ENCODE measurements at regions of chr19 and their contacts with region 1.

Region 1: DNA sequence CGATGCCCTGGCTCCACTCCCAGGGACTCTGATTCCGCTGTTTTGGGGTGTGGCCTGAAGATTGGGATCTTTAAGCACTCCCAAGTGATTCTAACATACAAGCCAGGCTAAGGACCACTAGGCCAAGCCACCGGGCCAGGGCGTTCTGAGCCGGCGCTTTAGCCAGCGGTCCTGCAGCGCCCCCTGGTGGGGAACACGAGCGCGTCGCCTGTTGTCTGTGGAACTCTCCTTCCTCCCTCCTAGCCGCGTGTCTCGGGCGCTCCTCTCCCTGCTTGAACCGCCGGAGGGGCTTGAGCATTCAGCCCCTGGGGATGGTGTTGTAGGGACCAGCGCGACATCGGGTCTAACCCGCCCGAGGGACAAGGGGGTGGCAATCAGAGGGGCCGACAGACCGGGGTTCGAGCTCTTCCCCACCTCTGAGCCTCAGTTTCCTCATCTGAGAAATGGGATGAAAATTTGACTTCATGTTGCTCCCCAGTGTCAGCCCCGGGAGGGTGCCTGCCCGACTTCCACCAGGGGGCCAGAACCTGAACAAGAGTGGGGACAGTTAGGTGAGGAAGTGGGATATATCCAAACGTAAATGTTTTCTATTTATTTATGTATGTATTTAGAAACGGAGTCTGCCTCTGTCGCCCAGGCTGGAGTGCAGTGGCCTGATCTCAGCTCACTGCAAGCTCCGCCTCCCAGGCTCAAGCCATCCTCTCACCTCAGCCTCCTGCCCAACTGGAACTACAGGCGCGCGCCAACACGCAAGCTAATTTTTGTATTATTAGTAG is 18.0 kb upstream of the PNMA8B start:
- DNase-seq: peak; percentile 57
- H3K4me3 ChIP-seq: no peak overlapping the region
- H3K27ac ChIP-seq: no peak overlapping the region
- H3K4me1 ChIP-seq: peaks cover 5% of the 10 kb centered on the region
- H3K27me3 ChIP-seq: no peaks in the 10 kb centered on the region
- CTCF ChIP-seq: peak; percentile 68 to 97

Region 2: GRCh38 chr19:46283771-46284170 is 229.9 kb before region 1 on chr19:
- CTCF ChIA-PET with region 1: no interaction called
- dilution Hi-C with region 1: no loop called
- in situ Hi-C with region 1: loop called (anchors 10 kb)
- intact Hi-C with region 1: loop called (anchors 1 kb)
- DNase-seq: no peak
- H3K4me3 ChIP-seq: no peak overlapping the region
- H3K27ac ChIP-seq: no peak overlapping the region
- H3K4me1 ChIP-seq: peaks cover under 1% of the 10 kb centered on the region
- H3K27me3 ChIP-seq: no peaks in the 10 kb centered on the region
- CTCF ChIP-seq: no peak

Region 3: DNA sequence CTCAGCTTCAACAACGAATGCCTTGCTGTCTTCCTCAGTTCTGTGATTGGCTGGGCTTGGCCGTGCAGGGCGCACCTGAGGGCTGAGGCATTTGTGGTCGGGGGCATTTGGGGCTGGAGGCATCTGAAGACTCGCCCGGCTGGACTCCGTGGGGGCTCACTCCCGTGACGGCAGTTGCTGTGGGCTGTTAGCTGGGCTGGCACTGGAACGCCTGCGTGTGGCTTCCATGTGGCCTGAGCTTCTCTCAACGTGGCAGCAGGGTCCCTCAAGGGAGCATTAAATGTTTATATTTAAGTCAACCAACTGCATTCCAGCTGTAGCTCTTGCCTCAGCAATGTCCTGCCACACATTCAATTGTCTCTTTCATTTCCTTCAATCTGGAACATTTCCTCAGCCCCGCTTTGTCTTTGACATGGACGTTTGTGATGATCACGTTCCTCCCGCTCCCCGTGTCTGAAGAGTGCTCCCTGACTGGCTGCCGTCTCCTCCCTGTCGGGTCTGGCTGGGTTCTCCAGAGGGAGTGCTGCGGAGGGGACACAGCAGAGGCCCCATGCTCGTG is 121.3 kb before region 1 on chr19:
- CTCF ChIA-PET with region 1: no interaction called
- dilution Hi-C with region 1: no loop called
- in situ Hi-C with region 1: no loop called
- intact Hi-C with region 1: loop called (anchors 1 kb)
- DNase-seq: no peak
- H3K4me3 ChIP-seq: no peak overlapping the region
- H3K27ac ChIP-seq: no peak overlapping the region
- H3K4me1 ChIP-seq: no peaks in the 10 kb centered on the region
- H3K27me3 ChIP-seq: no peaks in the 10 kb centered on the region
- CTCF ChIP-seq: no peak

Region 4: DNA sequence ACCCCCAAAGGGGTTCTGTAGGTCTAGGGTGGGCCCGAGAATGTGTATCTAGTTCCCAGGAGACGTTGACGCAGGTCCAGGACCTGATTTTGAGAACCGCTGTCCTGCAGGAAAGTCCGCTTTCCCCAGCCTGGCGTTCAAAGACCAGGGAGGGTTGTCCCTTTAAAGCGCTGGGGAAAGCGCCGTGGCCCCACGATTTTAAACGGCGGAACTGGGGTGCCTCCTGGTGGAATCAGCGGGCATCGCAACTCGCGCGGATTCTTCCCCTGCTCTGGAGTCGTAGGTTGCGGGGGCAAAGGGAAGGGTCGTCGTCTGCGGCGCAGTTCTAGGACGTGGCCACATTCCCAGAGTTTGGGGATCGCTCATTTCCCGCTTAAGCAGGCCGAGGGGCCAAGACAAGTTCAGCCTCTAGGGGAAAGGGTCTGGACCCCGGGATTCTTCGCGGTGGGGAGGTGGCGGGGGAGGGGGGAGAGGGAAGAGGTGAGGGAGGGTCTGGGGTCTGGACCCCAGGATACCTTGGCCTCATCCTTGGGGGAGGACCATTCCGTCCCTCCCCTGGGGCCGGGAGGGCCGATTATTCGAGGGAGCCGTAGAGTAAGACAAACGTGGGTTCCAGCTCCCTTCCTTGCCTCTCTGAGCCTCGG is 25.7 kb before region 1 on chr19:
- CTCF ChIA-PET with region 1: no interaction called
- dilution Hi-C with region 1: no loop called
- in situ Hi-C with region 1: no loop called
- intact Hi-C with region 1: loop called (anchors 2 kb)
- DNase-seq: peak; percentile 59
- H3K4me3 ChIP-seq: peak overlapping the region in 1 of 3 experiments; percentile 42
- H3K27ac ChIP-seq: no peak overlapping the region
- H3K4me1 ChIP-seq: peaks cover 6% of the 10 kb centered on the region
- H3K27me3 ChIP-seq: no peaks in the 10 kb centered on the region
- CTCF ChIP-seq: peak; percentile 86 to 95

Region 5: DNA sequence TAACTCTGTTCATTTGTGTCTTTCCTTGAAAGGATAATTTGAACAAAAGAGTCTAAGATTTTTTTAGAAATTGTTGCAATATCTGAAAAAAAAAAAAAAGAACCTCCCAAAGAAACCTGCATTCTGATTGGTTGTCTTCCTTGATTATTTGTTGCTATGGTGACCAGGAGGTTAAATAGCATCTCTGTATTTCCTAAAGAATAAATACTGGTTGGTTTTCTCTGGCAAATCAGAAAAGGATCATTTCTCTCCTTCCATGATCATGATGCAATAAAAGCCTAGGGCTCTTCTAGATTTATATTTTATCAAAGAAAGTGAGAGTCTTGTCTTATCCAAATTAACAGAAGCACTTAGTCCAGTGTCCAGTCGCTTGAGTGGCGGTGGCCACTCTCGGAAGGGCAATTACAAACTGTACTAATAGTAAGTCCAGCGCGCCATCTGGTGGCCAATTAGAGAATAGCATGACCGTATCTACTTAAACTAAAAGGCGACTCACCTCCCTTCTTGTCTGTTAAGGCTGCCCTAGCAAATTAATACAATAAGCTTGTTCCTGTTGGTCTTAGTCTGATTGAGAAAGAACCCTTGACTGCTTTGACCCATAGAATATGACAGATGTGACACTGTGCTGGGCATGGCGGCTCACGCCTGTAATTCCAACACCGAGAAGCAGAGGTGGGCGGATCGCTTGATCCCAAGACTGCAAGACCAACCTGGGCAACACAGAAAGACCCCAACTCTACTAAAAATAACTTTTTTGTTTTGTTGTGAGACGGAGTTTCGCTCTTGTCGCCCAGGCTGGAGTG is 29.0 kb after region 1 on chr19:
- CTCF ChIA-PET with region 1: no interaction called
- dilution Hi-C with region 1: no loop called
- in situ Hi-C with region 1: no loop called
- intact Hi-C with region 1: loop called (anchors 1 kb)
- DNase-seq: peak; percentile 76
- H3K4me3 ChIP-seq: no peak overlapping the region
- H3K27ac ChIP-seq: no peak overlapping the region
- H3K4me1 ChIP-seq: no peaks in the 10 kb centered on the region
- H3K27me3 ChIP-seq: no peaks in the 10 kb centered on the region
- CTCF ChIP-seq: peak; percentile 72 to 75

Region 6: GRCh38 chr19:46601318-46602224 is 87.9 kb after region 1 on chr19 and contains the start of gene CALM3:
- CTCF ChIA-PET with region 1: no interaction called
- dilution Hi-C with region 1: no loop called
- in situ Hi-C with region 1: no loop called
- intact Hi-C with region 1: no loop called
- DNase-seq: no peak
- H3K4me3 ChIP-seq: peak within 1 kb of the TSS; percentile 97 to 98 (median 98)
- H3K27ac ChIP-seq: peak within 1 kb of the TSS; percentile 100
- H3K4me1 ChIP-seq: peaks cover 24% of the 10 kb centered on the region
- H3K27me3 ChIP-seq: no peaks in the 10 kb centered on the region
- CTCF ChIP-seq: no peak
- total RNA-seq, gene CALM3: 97.4 to 206 TPM